ENCODE measurements at regions of chr14 and their contacts with region 1.

Region 1: DNA sequence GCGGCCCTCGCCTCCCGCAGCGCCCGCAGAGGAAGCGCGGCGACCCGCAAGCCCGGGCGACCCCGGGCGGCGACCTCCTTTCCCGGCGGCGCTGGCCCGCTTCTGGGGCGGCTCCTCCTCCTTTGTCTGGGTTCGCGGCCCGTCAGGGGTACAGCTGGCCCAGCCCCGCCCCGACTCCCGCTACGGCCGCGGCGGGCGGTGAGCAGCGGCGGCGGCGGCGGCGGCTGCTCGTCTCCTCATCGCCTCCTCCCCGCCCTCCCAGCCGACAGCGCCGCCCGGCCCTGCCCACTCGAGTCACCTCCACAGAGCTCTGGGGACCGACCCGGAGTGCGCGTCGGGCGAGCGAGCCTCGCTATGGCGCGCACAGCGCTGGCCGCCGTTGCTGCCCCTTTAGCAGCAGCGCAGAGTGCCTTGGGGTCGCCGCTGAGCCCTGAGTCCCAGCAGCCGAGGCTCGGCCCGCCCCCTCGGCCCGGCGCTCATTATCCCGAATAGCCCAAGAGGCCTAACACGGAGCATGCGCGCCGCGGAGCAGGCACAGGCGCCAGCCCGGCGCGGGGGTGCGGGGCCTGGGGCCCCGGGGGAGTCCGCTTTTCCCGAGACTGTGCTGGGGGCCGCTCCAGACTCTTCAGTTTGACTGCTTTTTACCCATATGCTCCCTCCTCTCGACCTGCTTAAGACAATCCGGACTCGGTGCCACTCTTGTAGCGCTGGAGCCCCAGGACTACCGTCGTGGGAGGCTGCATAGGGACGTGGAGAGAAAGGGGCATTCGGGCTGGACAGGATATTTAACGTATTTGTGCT is at the start of gene SOS2:
- DNase-seq: peak; percentile 91
- H3K4me3 ChIP-seq: peak within 1 kb of the TSS; percentile 78
- H3K27ac ChIP-seq: peak within 1 kb of the TSS; percentile 82
- H3K4me1 ChIP-seq: peaks cover 10% of the 10 kb centered on the region
- H3K27me3 ChIP-seq: no peaks in the 10 kb centered on the region
- CTCF ChIP-seq: no peak
- total RNA-seq, gene SOS2: 20.3 and 22.9 TPM in 2 replicates

Region 2: GRCh38 chr14:49653508-49653907 is 578.2 kb before region 1 on chr14:
- CTCF ChIA-PET with region 1: no interaction called
- POLR2A ChIA-PET with region 1: no interaction called
- intact Hi-C with region 1: no loop called
- DNase-seq: no peak
- H3K4me3 ChIP-seq: no peak overlapping the region
- H3K27ac ChIP-seq: no peak overlapping the region
- H3K4me1 ChIP-seq: no peaks in the 10 kb centered on the region
- H3K27me3 ChIP-seq: no peaks in the 10 kb centered on the region
- CTCF ChIP-seq: no peak

Region 3: GRCh38 chr14:49862089-49862673 is 369.5 kb before region 1 on chr14:
- CTCF ChIA-PET with region 1: no interaction called
- POLR2A ChIA-PET with region 1: no interaction called
- intact Hi-C with region 1: loop called (anchors 5 kb)
- DNase-seq: peak; percentile 95
- H3K4me3 ChIP-seq: peak overlapping the region; percentile 58
- H3K27ac ChIP-seq: peak overlapping the region; percentile 93
- H3K4me1 ChIP-seq: peaks cover 11% of the 10 kb centered on the region
- H3K27me3 ChIP-seq: no peaks in the 10 kb centered on the region
- CTCF ChIP-seq: peak; percentile 100

Region 4: DNA sequence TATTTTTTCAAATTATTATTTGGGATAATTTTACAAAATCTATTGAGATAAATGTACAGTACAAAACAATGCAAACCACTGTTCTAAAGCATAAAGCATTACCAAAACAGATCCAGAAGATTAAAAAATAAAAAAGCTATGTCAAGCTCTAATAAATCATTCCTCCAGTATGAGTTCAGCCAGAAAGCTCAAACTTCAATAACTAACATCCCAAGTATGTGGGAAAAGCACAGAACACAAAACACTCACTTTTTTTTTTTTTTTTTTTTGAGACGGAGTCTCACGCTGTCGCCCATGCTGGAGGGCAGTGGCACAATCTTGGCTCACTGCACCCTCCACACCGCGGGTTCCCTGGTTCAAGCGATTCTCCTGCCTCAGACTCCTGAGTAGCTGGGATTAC is 425.1 kb after region 1 on chr14:
- CTCF ChIA-PET with region 1: no interaction called
- POLR2A ChIA-PET with region 1: interaction called, 11 read pairs
- intact Hi-C with region 1: no loop called
- DNase-seq: no peak
- H3K4me3 ChIP-seq: no peak overlapping the region
- H3K27ac ChIP-seq: peak overlapping the region; percentile 83
- H3K4me1 ChIP-seq: peaks cover 31% of the 10 kb centered on the region
- H3K27me3 ChIP-seq: no peaks in the 10 kb centered on the region
- CTCF ChIP-seq: no peak

Measured in A673 (cell line).